Psoas muscle (tissue), 8 donors: ENCODE measurements at regions of chr10 and their contacts with region 1.

Region 1: DNA sequence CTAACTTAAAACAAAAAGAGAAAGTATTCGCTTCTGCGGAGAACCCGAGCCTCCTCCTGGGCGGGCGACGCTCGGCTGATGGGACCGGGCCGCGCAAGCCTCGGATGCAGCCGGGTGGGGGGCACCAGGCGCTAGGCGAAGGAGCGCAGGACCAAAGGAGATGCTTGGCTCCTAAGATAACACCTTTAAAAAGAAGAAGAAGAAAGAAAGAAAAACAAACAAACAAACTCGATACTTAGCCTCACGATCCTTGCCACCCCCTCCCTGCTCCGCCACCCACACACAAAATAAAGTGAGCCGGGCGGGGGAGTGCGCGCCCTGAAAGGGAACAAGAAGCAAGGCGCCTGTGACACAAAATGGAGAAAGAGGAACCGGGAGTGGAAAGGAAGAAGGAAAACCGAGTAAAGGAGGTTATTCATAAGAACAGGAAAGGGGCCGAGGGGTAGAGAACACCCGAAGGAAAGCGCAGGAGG is 34.0 kb upstream of the EBLN1 start:
- DNase-seq: peak; percentile 63 to 79
- ATAC-seq: peak; percentile 65 to 81 (median 68)
- H3K4me3 ChIP-seq: peak overlapping the region; percentile 94
- H3K27ac ChIP-seq: peak overlapping the region; percentile 87
- H3K4me1 ChIP-seq: peaks cover 4% of the 10 kb centered on the region
- H3K27me3 ChIP-seq: no peaks in the 10 kb centered on the region
- CTCF ChIP-seq: no peak

Region 2: DNA sequence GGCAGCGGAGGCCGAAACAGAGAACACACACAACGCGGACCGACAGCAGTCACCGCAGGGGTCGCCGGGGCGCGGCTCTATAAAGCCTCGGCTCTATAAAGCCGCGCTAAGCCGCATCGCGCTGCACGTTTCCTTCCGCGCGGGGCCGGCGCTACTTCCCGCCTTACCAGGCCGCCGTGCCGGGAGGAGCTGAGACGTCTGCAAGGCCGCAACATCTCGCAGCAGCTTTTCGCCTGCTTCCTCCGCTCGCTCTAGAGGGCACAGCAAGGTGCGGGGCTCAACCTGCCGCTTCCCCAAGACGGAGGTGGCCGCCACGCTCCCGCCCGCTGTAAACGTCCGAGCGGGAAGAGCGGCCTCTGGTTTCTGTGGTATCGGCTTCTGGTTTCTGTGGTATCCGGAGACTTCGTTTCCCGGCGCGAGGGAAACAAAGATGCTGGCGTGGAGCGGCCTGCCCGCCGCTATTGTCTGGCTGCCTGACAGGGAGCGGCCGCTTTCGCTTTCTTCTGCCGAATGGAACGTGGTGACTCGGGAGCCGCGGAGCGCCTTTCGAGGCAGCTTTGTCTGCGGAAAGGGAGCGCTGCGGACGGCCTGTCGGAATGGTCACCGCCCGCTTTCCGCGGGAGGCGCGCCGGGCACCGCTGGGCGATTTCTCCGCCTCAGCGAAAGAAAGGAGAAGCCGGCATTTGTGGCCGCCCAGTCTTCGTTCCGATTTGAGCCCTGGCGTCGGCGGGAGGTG is 185.3 kb after region 1 on chr10:
- intact Hi-C with region 1: loop called (anchors 5 to 10 kb)
- DNase-seq: peak; percentile 92 to 94
- ATAC-seq: peak; percentile 87 to 93 (median 91)
- H3K4me3 ChIP-seq: peak overlapping the region; percentile 92
- H3K27ac ChIP-seq: peak overlapping the region; percentile 92
- H3K4me1 ChIP-seq: peaks cover 9% of the 10 kb centered on the region
- H3K27me3 ChIP-seq: no peaks in the 10 kb centered on the region
- CTCF ChIP-seq: no peak